Gastrocnemius medialis (tissue), 4 donors: ENCODE measurements at regions of chr20 and their contacts with region 1.

Region 1: DNA sequence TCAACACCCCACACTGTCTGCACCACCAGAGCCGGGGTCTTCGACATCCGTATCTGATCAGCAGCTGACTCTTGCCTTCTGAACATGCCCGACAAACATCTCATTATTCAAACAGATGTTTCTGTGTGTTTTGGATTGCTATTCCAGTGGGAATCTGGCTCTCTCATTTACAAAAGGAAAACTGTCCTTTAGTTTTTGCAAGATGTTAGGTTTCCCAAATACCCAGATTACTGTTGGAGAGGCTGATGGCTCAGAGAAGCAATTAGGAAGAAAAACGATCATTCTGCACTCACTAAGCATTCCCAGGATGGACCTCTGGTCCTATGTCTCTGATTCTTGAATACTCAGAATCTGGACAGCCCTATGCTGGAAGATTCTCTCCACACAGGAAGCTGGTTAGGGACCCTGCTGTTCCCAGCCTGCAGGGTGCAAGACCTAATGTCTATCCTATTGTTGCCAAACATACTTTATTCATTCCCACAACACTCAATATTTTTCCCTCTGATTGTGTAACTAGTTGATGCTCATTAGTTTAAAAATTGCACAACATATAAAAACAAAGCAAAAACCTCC is 532.9 kb downstream of the CDH26 start:
- DNase-seq: no peak
- ATAC-seq: peak in 1 of 2 donors; percentile 62
- H3K4me3 ChIP-seq: no peak overlapping the region
- H3K27ac ChIP-seq: no peak overlapping the region
- H3K4me1 ChIP-seq: peaks cover 0 to 3% of the 10 kb centered on the region in 2 donors
- H3K27me3 ChIP-seq: no peaks in the 10 kb centered on the region
- CTCF ChIP-seq: no peak
- POLR2A ChIP-seq: no peak

Region 2: DNA sequence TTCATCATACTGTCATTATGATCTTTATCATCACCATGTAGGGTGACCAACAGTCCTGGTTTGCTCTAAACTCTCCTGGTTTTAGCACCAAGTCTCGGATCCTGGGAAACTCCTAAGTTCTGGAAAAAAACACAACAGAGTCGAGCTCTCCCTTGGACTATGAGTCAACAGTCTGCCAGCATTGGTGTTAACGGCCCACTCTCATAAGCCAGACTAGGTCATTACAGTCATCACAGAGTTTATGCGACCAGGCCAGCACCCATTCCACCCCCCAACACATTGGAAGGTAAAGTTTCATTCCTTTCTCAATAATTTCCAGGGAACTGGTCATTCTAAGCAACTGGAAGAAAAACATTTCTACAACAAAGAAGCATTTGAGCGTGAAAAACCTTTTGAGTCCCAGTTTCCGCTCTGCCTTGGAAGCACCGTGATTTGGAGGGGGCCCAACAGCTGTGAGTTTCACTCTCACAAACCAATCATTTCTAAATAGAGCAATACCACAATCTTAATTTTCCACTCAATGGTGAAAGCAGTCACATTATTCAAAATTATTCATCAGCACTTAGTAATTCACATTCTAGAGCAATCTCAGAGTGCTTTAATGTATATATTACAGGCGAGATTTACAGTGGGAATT is 87.9 kb before region 1 on chr20:
- in situ Hi-C with region 1: no loop called
- intact Hi-C with region 1: no loop called
- DNase-seq: no peak
- ATAC-seq: no peak
- H3K4me3 ChIP-seq: no peak overlapping the region
- H3K27ac ChIP-seq: no peak overlapping the region
- H3K4me1 ChIP-seq: no peaks in the 10 kb centered on the region
- H3K27me3 ChIP-seq: no peaks in the 10 kb centered on the region
- CTCF ChIP-seq: no peak
- POLR2A ChIP-seq: no peak

Region 3: GRCh38 chr20:60459212-60459611 is 31.9 kb before region 1 on chr20:
- in situ Hi-C with region 1: no loop called
- intact Hi-C with region 1: loop called (anchors 1 kb)
- DNase-seq: no peak
- ATAC-seq: no peak
- H3K4me3 ChIP-seq: no peak overlapping the region
- H3K27ac ChIP-seq: no peak overlapping the region
- H3K4me1 ChIP-seq: no peaks in the 10 kb centered on the region
- H3K27me3 ChIP-seq: no peaks in the 10 kb centered on the region
- CTCF ChIP-seq: no peak
- POLR2A ChIP-seq: no peak

Region 4: DNA sequence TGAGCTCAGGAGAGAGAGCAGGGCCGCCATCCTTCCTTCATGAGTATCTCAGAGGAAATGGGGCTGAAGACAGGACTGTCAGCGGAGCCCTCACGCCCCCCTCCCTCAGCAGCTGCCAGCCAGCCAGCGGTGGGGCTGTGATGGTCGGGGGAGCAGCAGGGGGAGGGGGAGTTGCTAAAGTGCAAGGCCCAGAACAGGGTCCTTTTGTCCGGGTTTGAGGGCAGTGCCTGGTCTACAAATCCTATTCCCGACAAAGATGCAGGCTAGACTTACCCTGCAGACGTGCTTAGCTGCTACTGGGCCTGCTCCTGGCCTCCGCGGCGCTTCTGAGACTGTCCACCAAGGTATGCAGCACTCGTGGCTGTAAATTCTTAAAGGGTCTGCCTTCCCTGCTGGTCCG is 167.5 kb after region 1 on chr20:
- in situ Hi-C with region 1: no loop called
- intact Hi-C with region 1: no loop called
- DNase-seq: no peak
- ATAC-seq: no peak
- H3K4me3 ChIP-seq: no peak overlapping the region
- H3K27ac ChIP-seq: no peak overlapping the region
- H3K4me1 ChIP-seq: no peaks in the 10 kb centered on the region
- H3K27me3 ChIP-seq: no peaks in the 10 kb centered on the region
- CTCF ChIP-seq: no peak
- POLR2A ChIP-seq: no peak

Region 5: DNA sequence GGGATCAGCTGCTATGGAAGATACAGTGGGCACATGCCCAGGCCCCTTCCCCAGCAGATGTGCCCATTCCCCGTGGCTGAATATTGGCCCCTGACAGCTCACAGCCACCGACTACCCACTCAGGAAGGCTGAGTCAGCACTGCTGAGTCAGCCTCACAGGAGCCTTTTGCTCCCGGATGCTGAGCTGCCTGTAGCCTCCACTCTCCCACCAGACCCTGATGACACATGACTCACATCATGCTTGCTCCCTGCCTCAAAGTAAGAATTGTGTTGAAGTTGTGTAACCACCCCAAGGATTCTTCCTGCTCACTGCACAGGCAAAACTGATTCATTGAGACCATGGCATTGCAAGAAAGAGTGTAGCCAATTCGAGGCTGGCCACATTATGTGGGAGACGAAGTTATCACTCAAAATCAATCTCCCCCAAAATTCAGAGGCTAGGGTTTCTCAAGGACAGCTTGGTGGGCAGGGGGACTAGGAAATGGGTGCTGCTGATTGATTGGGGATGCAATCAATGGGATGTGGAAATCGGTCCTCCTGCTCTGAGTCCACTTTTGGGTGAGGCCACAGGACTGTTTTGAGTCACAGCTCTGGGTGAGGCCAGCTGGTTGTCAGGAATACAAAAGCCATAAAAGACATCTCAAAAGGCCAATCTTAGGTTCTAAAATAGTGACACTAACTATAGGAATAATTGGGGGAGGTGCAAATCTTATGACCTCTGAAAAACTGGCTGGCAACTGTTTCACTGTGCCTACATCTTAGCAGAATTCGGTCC is 204.3 kb after region 1 on chr20:
- in situ Hi-C with region 1: no loop called
- intact Hi-C with region 1: no loop called
- DNase-seq: no peak
- ATAC-seq: no peak
- H3K4me3 ChIP-seq: no peak overlapping the region
- H3K27ac ChIP-seq: no peak overlapping the region
- H3K4me1 ChIP-seq: no peaks in the 10 kb centered on the region
- H3K27me3 ChIP-seq: no peaks in the 10 kb centered on the region
- CTCF ChIP-seq: no peak
- POLR2A ChIP-seq: no peak